ENCODE measurements at regions of chr20 and their contacts with region 1.

Region 1: DNA sequence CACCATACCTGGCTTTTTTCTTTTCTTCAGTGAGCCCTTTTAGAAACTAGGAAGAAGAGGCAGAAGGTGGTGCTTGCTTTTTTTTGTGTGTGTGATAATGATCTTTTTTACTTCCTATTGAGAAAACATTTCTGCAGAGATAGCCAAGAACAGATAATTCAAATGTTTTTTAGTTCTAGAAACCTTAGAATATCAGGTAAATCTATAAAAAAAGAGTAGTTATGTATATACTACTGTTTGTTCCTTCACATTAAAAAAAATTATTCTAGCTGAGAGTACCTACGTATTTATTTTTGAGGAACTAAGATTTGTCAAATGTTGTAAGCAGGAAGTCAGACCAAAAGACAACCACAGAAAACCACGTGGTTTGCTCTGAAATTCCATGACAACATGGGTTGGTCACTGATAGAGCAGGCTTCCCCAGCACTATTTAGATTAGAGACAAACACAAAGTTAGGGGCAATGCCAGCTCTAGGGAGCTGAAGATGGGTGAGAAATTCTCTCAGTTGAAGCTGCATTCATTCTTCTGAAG is 12.8 kb downstream of the STK4 start:
- DNase-seq: peak; percentile 80
- H3K4me3 Mint-ChIP-seq: peak overlapping the region; percentile 58
- H3K27ac Mint-ChIP-seq: peak overlapping the region; percentile 94
- H3K4me1 Mint-ChIP-seq: peaks cover 82% of the 10 kb centered on the region
- H3K27me3 Mint-ChIP-seq: no peaks in the 10 kb centered on the region

Region 2: DNA sequence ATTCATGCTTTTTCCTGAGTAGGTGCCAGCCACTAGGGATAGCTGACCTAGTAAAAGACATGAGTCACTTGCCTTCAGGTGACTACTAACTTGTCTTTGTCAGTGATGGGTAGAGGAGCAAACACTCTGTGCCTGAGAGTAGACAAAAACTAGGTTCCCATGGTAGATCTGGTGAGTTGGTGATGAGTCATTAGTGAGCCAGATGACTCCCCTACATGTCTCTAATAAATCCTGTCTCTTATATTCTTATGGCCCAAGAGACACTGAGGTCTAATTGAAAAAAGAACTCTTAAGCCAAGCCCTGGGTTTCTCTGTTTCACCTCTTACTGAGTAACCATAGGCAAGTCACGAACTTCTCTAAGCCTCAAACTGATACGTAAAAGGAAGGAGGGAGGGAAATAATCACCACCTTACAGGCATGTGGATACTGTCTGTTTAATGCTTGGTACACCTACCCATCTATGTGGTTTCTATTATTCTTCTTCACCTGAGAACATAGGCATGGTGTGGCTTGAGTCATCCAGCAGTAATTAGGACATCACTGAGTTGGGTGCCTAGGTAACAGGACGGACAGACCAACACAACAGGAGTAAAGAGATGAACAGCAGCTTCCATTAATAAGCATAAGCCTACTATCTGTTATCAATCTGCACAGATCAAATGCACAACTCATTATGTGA is 483.2 kb before region 1 on chr20:
- CTCF ChIA-PET with region 1: no interaction called
- intact Hi-C with region 1: loop called (anchors 10 kb)
- DNase-seq: peak; percentile 31
- H3K4me3 Mint-ChIP-seq: no peak overlapping the region
- H3K27ac Mint-ChIP-seq: peak overlapping the region; percentile 82
- H3K4me1 Mint-ChIP-seq: peaks cover 39% of the 10 kb centered on the region
- H3K27me3 Mint-ChIP-seq: no peaks in the 10 kb centered on the region

Region 3: GRCh38 chr20:44598423-44599305 is 380.5 kb before region 1 on chr20:
- CTCF ChIA-PET with region 1: no interaction called
- intact Hi-C with region 1: no loop called
- DNase-seq: peak; percentile 61
- H3K4me3 Mint-ChIP-seq: peak overlapping the region; percentile 70
- H3K27ac Mint-ChIP-seq: peak overlapping the region; percentile 81
- H3K4me1 Mint-ChIP-seq: peaks cover 32% of the 10 kb centered on the region
- H3K27me3 Mint-ChIP-seq: no peaks in the 10 kb centered on the region

Region 4: DNA sequence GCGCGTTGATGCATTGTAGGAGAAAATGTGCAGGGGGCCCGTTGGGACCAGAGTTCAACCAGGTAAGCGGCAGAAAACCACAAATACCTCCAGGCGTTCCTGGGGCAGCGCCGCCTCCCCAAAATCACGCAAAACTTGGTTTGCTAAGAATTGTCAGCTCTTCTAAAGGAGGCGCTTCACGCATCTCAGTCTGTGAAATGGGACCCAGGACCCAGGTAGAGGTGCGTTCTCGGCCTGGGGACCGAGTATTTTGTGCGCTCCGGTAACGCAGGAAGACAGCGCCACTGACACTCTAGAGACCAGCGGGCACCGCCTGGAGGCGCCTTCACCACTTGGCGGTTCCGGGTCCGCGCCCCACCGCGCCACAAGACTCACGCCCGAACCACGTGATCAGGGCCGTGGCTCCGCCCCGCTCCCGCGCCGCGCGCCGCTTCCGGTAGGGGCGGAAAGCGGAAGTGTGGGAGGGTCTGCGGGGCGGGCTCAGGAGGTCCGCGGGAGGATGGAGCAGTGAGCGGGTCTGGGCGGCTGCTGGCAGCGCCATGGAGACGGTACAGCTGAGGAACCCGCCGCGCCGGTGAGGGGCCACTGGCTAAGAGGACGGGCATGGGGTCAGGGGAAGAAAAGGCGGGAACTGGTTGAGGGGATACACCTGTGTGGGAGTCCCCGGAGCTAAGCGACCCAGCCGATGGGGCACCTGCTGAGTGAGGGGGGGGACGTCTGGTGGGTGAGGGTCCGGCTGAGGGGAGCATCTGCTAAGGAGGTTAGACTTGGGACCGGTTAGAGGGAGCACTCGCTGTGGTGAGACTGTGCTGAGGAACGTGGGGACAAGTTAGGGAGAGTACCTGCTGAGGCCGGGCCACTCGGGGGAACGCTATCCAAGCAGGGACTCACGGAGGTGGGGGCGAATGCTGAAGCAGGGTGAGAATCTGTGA is 12.9 kb before region 1 on chr20 and contains the start of gene STK4:
- CTCF ChIA-PET with region 1: interaction called, 6 read pairs
- intact Hi-C with region 1: loop called (anchors 1 kb)
- DNase-seq: peak; percentile 96
- H3K4me3 Mint-ChIP-seq: peak within 1 kb of the TSS; percentile 88
- H3K27ac Mint-ChIP-seq: peak within 1 kb of the TSS; percentile 98
- H3K4me1 Mint-ChIP-seq: peaks cover 56% of the 10 kb centered on the region
- H3K27me3 Mint-ChIP-seq: no peaks in the 10 kb centered on the region
- total RNA-seq, gene STK4: 110 to 116 TPM

Measured in activated naive CD4-positive, alpha-beta T cell treated with anti-CD3 and anti-CD28 coated beads for 36 hours (primary cell).